ENCODE measurements at regions of chr6 and their contacts with region 1.

Region 1: DNA sequence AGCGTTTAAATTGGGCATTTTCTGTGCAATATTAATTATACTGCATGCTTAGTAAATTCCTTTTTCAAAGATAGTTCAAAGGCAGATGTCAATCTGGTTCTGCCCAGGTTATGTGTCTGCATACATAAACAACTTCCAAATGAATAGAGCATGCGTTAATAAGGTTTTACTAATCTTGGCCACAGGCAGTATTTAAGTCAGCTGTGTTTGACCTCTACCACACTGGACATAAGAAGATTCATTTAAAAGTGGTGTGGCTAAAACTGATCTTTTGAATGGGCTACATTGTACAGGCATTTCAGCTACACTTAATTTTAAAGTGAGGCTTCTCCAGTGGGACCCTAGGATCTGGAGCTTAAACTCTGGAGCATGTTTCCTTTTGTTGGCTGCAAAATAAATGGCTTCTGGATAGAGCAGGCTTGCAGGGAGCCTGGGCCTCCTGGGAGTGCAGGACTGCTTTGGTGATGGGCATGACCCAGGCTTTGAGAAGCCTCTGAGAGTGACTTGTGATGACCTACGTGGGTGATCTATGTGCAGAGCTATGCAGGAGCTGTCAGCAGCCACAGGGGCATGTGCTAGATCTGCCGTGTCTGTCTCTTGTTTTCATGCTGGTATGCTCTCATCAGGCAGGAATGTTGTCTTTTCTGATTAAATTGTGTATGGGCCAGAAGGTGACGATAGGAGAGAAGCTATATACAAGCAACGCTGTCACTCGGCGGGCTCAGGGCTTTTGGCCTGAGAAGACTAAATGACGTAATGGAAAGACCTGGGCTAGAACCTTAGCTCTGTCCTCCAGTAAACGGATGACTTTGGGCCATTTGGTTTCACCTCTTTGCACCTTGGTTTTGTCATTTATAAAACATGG is 331.2 kb downstream of the QKI start:
- DNase-seq: no peak
- ATAC-seq: no peak
- H3K4me3 ChIP-seq: no peak overlapping the region
- H3K4me3 Mint-ChIP-seq: no peak overlapping the region
- H3K27ac ChIP-seq: no peak overlapping the region
- H3K27ac Mint-ChIP-seq: no peak overlapping the region
- H3K4me1 ChIP-seq: peaks cover 8% of the 10 kb centered on the region in 2 donors
- H3K4me1 Mint-ChIP-seq: peaks cover 9% of the 10 kb centered on the region
- H3K27me3 ChIP-seq: peaks cover 0 to 43% (median 6%) of the 10 kb centered on the region in 4 experiments
- H3K27me3 Mint-ChIP-seq: peaks cover 38% of the 10 kb centered on the region
- CTCF ChIP-seq: no peak

Region 2: GRCh38 chr6:163764565-163764964 is 18.8 kb after region 1 on chr6:
- CTCF ChIA-PET with region 1: no interaction called
- POLR2A ChIA-PET with region 1: interaction called, 10 read pairs
- intact Hi-C with region 1: no loop called
- DNase-seq: no peak
- ATAC-seq: no peak
- H3K4me3 ChIP-seq: no peak overlapping the region
- H3K4me3 Mint-ChIP-seq: no peak overlapping the region
- H3K27ac ChIP-seq: no peak overlapping the region
- H3K27ac Mint-ChIP-seq: no peak overlapping the region
- H3K4me1 ChIP-seq: no peaks in the 10 kb centered on the region
- H3K4me1 Mint-ChIP-seq: no peaks in the 10 kb centered on the region
- H3K27me3 ChIP-seq: peaks cover 0 to 5% (median 5%) of the 10 kb centered on the region in 4 experiments
- H3K27me3 Mint-ChIP-seq: peaks cover 22% of the 10 kb centered on the region
- CTCF ChIP-seq: no peak

Region 3: GRCh38 chr6:163842467-163842866 is 96.7 kb after region 1 on chr6:
- CTCF ChIA-PET with region 1: no interaction called
- POLR2A ChIA-PET with region 1: no interaction called
- intact Hi-C with region 1: no loop called
- DNase-seq: no peak
- ATAC-seq: no peak
- H3K4me3 ChIP-seq: no peak overlapping the region
- H3K4me3 Mint-ChIP-seq: no peak overlapping the region
- H3K27ac ChIP-seq: no peak overlapping the region
- H3K27ac Mint-ChIP-seq: no peak overlapping the region
- H3K4me1 ChIP-seq: peaks cover 0 to 7% of the 10 kb centered on the region in 2 donors
- H3K4me1 Mint-ChIP-seq: peaks cover 3% of the 10 kb centered on the region
- H3K27me3 ChIP-seq: peaks cover 0 to 5% (median 0%) of the 10 kb centered on the region in 4 experiments
- H3K27me3 Mint-ChIP-seq: peaks cover 5% of the 10 kb centered on the region
- CTCF ChIP-seq: no peak

Measured in B cell (primary cell).